ENCODE measurements at regions of chr3 and their contacts with region 1.

Region 1: DNA sequence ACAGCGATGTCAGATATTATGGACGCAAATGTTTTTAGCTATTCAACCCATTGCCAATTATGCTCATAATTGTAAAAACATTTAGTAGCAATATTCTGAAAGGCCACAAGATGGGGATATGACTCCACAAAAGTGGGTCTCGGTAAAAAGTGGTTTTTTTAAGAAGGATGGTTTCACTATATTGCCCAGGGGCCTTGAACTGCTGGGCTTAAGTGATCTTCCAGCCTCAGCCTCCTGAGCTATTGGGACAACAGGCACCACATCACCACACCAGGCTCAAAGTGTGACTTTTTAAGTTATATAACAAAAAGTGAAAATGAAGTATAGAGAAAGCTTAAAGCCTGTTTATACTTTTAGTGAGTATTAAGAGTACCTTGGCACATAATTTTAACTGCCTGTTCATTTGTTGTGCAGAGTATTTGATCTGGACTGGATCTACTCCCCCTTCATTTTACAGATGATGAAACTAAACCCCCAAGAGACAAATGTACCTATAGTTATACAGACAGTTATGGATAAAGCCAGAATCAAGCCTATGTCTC is 9.4 kb downstream of the NAA50 start:
- DNase-seq: peak in 1 of 2 donors; percentile 85
- ATAC-seq: peak; percentile 87 to 92 (median 88)
- H3K4me3 ChIP-seq: no peak overlapping the region
- H3K4me3 Mint-ChIP-seq: no peak overlapping the region
- H3K27ac ChIP-seq: no peak overlapping the region
- H3K27ac Mint-ChIP-seq: peak overlapping the region; percentile 82 to 100
- H3K4me1 ChIP-seq: peaks cover 5% of the 10 kb centered on the region
- H3K4me1 Mint-ChIP-seq: peaks cover 32 to 37% of the 10 kb centered on the region in 2 donors
- H3K27me3 ChIP-seq: no peaks in the 10 kb centered on the region
- H3K27me3 Mint-ChIP-seq: no peaks in the 10 kb centered on the region
- CTCF ChIP-seq: peak; percentile 79

Region 2: DNA sequence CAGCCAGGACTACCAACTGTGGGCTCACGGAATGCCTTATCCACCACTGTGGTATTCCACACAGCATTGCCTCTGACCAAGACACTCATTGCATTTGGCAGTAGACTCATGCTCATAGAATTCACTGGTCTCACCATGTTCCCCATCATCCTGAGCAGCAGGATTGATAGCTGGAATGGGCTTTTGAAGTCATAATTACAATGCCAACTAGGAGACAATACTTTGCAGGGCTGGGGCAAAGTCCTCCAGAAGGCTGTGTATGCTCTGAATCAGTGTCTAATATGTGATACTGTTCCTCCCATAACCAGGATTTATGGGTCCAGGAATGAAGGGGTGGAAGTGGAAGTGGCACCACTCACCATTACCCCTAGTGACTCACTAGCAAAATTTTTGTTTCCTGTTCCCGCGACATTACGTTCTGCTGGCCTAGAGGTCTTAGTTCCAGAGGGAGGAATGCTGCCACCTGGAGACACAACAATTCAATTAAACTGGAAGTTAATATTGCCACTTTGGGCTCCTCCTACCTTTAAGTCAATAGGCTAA is 1037.1 kb before region 1 on chr3:
- intact Hi-C with region 1: no loop called
- DNase-seq: no peak
- ATAC-seq: no peak
- H3K4me3 ChIP-seq: no peak overlapping the region
- H3K4me3 Mint-ChIP-seq: no peak overlapping the region
- H3K27ac ChIP-seq: no peak overlapping the region
- H3K27ac Mint-ChIP-seq: no peak overlapping the region
- H3K4me1 ChIP-seq: no peaks in the 10 kb centered on the region
- H3K4me1 Mint-ChIP-seq: peaks cover 0 to 10% of the 10 kb centered on the region in 2 donors
- H3K27me3 ChIP-seq: no peaks in the 10 kb centered on the region
- H3K27me3 Mint-ChIP-seq: peaks cover 5 to 23% of the 10 kb centered on the region in 2 donors
- CTCF ChIP-seq: no peak

Region 3: DNA sequence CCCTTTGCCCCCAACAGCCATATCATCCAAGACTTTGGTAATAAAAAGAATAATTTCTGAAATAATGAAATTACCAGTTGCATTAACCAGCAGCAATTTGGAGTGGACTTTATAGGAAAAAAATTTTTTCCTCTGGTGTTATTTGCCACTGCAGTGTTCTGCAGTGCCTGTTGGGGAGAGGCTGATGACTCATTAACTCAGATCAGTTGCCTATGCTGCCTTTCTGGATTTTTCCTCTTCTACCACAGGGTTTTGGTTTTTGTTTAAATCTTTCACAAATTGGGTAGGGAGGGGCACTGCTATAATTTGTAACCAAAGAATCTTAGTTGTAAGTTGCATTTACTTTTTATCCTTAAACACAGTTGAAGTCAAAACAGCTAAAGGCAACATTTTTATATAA is 32.9 kb after region 1 on chr3:
- intact Hi-C with region 1: no loop called
- DNase-seq: no peak
- ATAC-seq: peak in 1 of 3 donors; percentile 52
- H3K4me3 ChIP-seq: no peak overlapping the region
- H3K4me3 Mint-ChIP-seq: no peak overlapping the region
- H3K27ac ChIP-seq: no peak overlapping the region
- H3K27ac Mint-ChIP-seq: no peak overlapping the region
- H3K4me1 ChIP-seq: no peaks in the 10 kb centered on the region
- H3K4me1 Mint-ChIP-seq: peaks cover 13 to 17% of the 10 kb centered on the region in 2 donors
- H3K27me3 ChIP-seq: no peaks in the 10 kb centered on the region
- H3K27me3 Mint-ChIP-seq: no peaks in the 10 kb centered on the region
- CTCF ChIP-seq: no peak

Region 4: DNA sequence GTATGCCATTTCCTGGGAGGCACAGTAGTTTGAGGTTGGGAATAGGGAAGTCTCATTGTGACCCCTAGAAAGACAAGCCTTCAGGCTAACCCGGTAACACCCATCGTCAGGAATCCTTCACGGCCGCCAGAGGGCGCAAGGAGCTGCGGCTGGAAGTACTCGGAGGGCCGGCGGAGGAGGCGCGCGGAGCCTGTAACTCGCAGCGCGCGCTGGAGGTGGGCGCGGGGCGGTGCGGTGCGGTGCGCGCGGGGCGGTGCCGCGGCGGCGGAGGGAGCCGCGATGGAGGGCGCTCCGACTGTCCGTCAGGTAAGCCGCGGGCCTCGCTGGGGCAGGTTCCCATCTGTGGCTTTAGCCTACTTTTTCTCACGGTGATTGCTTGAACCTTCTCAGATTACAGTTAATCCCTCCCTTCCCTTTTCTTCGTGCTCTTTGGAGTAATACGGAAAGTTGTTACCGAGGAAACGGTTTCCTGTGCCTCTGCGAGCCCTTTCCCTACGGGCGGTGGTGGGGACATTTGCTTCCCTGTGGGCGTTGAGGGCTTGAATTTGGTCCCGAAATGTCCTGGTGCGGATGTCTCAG is 102.1 kb after region 1 on chr3 and contains the start of gene GRAMD1C:
- intact Hi-C with region 1: loop called (anchors 2 kb)
- DNase-seq: peak; percentile 82 to 95
- ATAC-seq: peak; percentile 98 to 100 (median 99)
- H3K4me3 ChIP-seq: peak within 1 kb of the TSS; percentile 50
- H3K4me3 Mint-ChIP-seq: peak within 1 kb of the TSS; percentile 87
- H3K27ac ChIP-seq: peak within 1 kb of the TSS; percentile 15
- H3K27ac Mint-ChIP-seq: peak within 1 kb of the TSS in 1 of 2 donors; percentile 74
- H3K4me1 ChIP-seq: peaks cover 10% of the 10 kb centered on the region
- H3K4me1 Mint-ChIP-seq: peaks cover 7 to 8% of the 10 kb centered on the region in 2 donors
- H3K27me3 ChIP-seq: no peaks in the 10 kb centered on the region
- H3K27me3 Mint-ChIP-seq: peaks cover 0 to 2% of the 10 kb centered on the region in 2 donors
- CTCF ChIP-seq: peak; percentile 86
- total RNA-seq, gene GRAMD1C: 2.7 to 3.9 (median 3.6) TPM

Region 5: DNA sequence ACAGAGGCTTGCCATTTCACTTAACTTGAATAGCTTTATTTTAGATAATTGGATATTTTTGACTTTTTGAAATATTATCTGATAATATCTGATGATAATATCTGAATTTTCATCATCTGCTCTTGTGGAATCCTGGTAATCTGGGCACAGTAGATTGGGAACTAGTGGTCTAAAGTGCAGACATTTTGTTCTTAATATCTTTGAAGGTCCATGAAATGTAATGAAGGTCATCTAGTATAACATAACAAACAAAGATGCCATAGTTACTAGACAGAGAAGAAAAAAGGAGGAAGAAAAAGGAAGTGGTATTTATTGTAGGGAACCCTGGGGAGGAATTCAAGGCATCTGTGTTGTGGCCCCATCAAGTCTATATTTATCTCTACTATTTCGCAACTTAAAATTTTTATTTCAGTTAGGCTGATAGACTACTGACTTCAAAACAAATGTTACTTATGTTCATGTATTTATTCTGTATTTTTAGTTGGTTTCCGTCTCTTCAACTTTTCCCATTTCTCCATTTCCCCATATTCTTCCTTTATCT is 162.2 kb after region 1 on chr3:
- intact Hi-C with region 1: no loop called
- DNase-seq: no peak
- ATAC-seq: no peak
- H3K4me3 ChIP-seq: no peak overlapping the region
- H3K4me3 Mint-ChIP-seq: no peak overlapping the region
- H3K27ac ChIP-seq: no peak overlapping the region
- H3K27ac Mint-ChIP-seq: no peak overlapping the region
- H3K4me1 ChIP-seq: no peaks in the 10 kb centered on the region
- H3K4me1 Mint-ChIP-seq: no peaks in the 10 kb centered on the region
- H3K27me3 ChIP-seq: no peaks in the 10 kb centered on the region
- H3K27me3 Mint-ChIP-seq: peaks cover 2 to 8% of the 10 kb centered on the region in 2 donors
- CTCF ChIP-seq: no peak

Region 6: GRCh38 chr3:113912552-113913236 is 176.1 kb after region 1 on chr3:
- intact Hi-C with region 1: loop called (anchors 1 kb)
- DNase-seq: peak in 1 of 2 donors; percentile 73
- ATAC-seq: peak; percentile 86 to 91 (median 88)
- H3K4me3 ChIP-seq: no peak overlapping the region
- H3K4me3 Mint-ChIP-seq: peak overlapping the region; percentile 51
- H3K27ac ChIP-seq: peak overlapping the region; percentile 8
- H3K27ac Mint-ChIP-seq: peak overlapping the region; percentile 61 to 69
- H3K4me1 ChIP-seq: no peaks in the 10 kb centered on the region
- H3K4me1 Mint-ChIP-seq: peaks cover 8 to 9% of the 10 kb centered on the region in 2 donors
- H3K27me3 ChIP-seq: no peaks in the 10 kb centered on the region
- H3K27me3 Mint-ChIP-seq: no peaks in the 10 kb centered on the region
- CTCF ChIP-seq: peak; percentile 45